Colonic mucosa (tissue), 4 donors: ENCODE measurements at regions of chr5 and their contacts with region 1.

Region 1: GRCh38 chr5:69093771-69094482 is at the start of gene SLC30A5:
- DNase-seq: peak; percentile 99
- H3K4me3 ChIP-seq: peak within 1 kb of the TSS; percentile 88
- H3K27ac ChIP-seq: peak within 1 kb of the TSS; percentile 96
- H3K4me1 ChIP-seq: peaks cover 7% of the 10 kb centered on the region
- H3K27me3 ChIP-seq: no peaks in the 10 kb centered on the region
- CTCF ChIP-seq: peak; percentile 88
- total RNA-seq, gene SLC30A5: 45.9 to 50.5 TPM

Region 2: GRCh38 chr5:69184621-69185020 is 90.7 kb after region 1 on chr5:
- intact Hi-C with region 1: no loop called
- DNase-seq: no peak
- H3K4me3 ChIP-seq: no peak overlapping the region
- H3K27ac ChIP-seq: no peak overlapping the region
- H3K4me1 ChIP-seq: no peaks in the 10 kb centered on the region
- H3K27me3 ChIP-seq: no peaks in the 10 kb centered on the region
- CTCF ChIP-seq: no peak

Region 3: DNA sequence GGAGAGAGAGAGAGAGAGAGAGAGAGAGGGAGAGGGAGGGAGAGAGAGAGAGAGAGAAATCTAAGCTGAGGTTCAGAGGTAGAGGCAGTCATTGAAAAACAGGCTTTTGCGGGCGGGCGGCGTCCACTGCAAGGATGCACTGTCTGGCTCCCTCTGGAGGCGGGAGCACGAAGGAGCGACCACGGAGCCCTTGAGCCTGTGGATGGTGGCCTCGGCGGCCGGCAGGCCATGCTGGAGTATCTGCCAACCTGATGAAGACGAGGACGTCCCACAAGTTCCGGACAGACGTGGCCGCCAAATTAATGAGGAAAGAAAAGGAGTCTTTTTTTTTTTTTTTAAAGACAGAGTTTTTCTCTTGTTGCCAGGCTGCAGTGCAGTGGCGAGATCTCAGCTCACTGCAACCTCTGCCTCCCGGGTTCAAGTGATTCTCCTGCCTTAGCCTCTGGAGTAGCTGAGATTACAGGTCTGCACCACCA is 240.9 kb after region 1 on chr5:
- intact Hi-C with region 1: loop called (anchors 5 kb)
- DNase-seq: peak; percentile 88
- H3K4me3 ChIP-seq: no peak overlapping the region
- H3K27ac ChIP-seq: no peak overlapping the region
- H3K4me1 ChIP-seq: no peaks in the 10 kb centered on the region
- H3K27me3 ChIP-seq: no peaks in the 10 kb centered on the region
- CTCF ChIP-seq: peak; percentile 65